Naive thymus-derived CD8-positive, alpha-beta T cell (primary cell): ENCODE measurements at regions of chr1 and their contacts with region 1.

Region 1: DNA sequence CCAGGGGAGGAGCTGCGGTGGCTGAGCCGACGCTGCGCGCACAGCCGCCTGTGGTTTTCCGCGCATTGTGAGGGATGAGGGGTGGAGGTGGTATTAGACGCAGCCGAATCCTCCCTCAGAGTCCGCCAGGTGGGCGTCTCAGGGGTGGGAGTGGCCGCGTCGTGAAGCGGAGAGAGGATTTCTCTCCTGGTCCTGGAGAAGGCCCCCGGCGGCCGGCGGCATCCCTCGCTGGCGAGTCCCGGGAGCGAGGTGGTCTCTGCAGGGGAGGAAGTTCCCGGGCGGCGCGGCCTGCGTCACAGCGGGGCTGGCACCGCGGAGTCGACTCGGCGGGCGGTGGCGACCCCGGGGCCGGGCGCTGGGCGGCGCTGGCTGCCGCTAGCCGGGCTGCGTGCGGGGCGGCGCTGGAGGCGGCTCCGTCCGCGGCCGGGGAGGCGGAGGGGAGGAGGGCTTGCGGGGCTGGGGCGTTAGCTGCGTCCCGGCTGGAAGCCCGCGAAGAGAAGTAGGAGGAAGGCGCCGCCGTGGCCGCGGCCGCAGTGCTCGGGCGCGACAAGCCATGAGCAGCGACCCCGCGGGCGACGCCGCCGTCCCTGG is at the start of gene LRRC8C:
- DNase-seq: peak; percentile 80 to 97 (median 88)
- ATAC-seq: peak; percentile 79 to 84
- H3K4me3 Mint-ChIP-seq: peak within 1 kb of the TSS; percentile 91 to 98 (median 96)
- H3K27ac Mint-ChIP-seq: peak within 1 kb of the TSS; percentile 94 to 99 (median 98)
- H3K4me1 Mint-ChIP-seq: peaks cover 43 to 85% (median 78%) of the 10 kb centered on the region in 4 donors
- H3K27me3 Mint-ChIP-seq: no peaks in the 10 kb centered on the region
- polyA plus RNA-seq, gene LRRC8C: 10.0 to 19.2 (median 14.2) TPM

Region 2: DNA sequence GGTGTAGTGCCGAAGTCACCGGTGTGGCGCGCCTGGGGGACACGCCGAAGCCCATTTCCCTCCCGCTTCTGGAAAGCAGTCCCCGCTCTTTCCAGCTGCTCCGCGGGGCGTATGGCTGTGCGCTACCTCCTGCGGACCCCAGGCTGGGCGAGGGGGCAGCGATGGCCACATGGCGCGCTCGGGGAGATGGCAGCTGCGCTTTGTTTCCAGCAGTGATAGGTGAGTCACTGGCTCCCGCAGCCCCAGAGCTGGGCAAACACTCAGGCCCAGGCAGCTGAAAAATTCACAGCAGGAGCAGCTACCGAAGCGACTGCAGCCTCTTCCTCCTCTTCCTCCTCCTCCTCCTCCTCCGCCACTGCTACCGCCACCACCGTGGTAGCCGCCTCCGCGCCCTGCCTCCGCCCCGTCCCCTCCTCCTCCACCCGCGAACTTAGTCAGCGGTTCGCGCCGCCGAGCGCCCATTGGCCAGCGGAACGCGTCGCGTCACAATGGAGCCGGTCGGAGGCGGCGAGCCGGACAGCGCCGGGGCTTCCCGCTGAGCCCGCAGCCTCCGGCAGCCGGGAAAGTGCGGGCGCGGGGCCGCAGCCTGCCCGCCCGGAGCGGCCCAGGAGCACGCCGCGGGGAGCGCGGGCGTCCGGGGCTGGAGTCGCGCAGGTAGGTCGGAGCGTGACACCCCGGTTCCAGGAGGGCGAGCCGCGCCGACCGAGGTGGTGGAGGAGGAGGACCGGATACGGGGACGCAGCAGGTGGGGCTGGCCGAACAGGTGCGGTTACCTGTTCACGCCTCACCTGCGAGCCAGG is 108.2 kb before region 1 on chr1 and contains the start of gene LRRC8B:
- POLR2A ChIA-PET with region 1: interaction called, 11 read pairs
- DNase-seq: peak; percentile 74 to 90 (median 85)
- ATAC-seq: peak; percentile 85 to 86
- H3K4me3 Mint-ChIP-seq: peak within 1 kb of the TSS in 5 of 10 donors; percentile 81 to 99 (median 92)
- H3K27ac Mint-ChIP-seq: peak within 1 kb of the TSS; percentile 88 to 96 (median 94)
- H3K4me1 Mint-ChIP-seq: peaks cover 7 to 19% (median 14%) of the 10 kb centered on the region in 4 donors
- H3K27me3 Mint-ChIP-seq: no peaks in the 10 kb centered on the region
- polyA plus RNA-seq, gene LRRC8B: 8.5 to 13.6 (median 12.2) TPM

Region 3: DNA sequence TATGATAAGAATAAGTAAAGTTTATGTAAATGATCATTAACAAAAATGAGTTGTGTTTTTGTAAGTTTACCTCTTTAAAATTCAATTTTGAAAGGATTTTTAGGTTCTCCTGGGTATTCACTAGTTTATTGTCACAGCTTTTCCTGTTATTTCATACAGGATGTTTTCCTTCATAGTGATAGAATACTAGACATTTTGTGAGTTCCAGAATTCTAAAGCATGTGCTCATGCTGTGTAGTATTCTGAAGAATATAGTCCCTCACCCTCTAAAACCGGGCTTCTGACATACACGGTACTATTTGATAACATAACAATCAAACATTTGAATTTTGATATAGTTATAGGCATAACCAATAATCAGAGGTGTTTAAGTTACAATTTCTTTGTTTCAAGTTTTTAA is 10.8 kb after region 1 on chr1:
- POLR2A ChIA-PET with region 1: interaction called, 15 read pairs
- DNase-seq: no peak
- ATAC-seq: no peak
- H3K4me3 Mint-ChIP-seq: peak overlapping the region in 2 of 10 donors; percentile 18 to 58
- H3K27ac Mint-ChIP-seq: peak overlapping the region in 7 of 10 donors; percentile 55 to 87 (median 79)
- H3K4me1 Mint-ChIP-seq: peaks cover 19 to 74% (median 55%) of the 10 kb centered on the region in 4 donors
- H3K27me3 Mint-ChIP-seq: no peaks in the 10 kb centered on the region

Region 4: DNA sequence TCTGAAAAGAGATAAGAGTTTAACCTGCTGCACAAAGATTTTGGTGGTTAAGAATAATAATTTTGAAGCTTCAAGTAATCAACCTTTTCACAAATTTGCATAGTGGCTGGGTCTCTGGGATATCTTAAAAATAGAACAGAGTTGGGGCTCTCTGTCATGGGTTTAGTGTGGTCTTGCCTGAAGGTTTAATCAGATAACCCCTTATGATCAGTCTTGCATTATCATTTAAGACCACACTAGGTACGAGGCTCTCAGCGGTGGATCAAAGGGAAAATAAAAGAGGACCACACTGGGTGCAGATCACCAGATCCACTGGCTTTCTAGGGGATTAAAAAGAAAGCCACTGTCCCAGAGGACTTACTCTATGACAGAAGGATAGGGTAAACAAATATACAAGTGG is 19.6 kb after region 1 on chr1:
- POLR2A ChIA-PET with region 1: interaction called, 77 read pairs
- DNase-seq: no peak
- ATAC-seq: no peak
- H3K4me3 Mint-ChIP-seq: peak overlapping the region in 8 of 10 donors; percentile 1 to 49 (median 30)
- H3K27ac Mint-ChIP-seq: peak overlapping the region; percentile 28 to 96 (median 80)
- H3K4me1 Mint-ChIP-seq: peaks cover 38 to 90% (median 81%) of the 10 kb centered on the region in 4 donors
- H3K27me3 Mint-ChIP-seq: no peaks in the 10 kb centered on the region

Region 5: GRCh38 chr1:89657886-89658285 is 25.1 kb after region 1 on chr1:
- POLR2A ChIA-PET with region 1: interaction called, 77 read pairs
- DNase-seq: peak in 8 of 10 donors; percentile 27 to 85 (median 64)
- ATAC-seq: peak; percentile 85 to 93
- H3K4me3 Mint-ChIP-seq: peak overlapping the region; percentile 22 to 79 (median 56)
- H3K27ac Mint-ChIP-seq: peak overlapping the region; percentile 74 to 96 (median 92)
- H3K4me1 Mint-ChIP-seq: peaks cover 44 to 94% (median 85%) of the 10 kb centered on the region in 4 donors
- H3K27me3 Mint-ChIP-seq: no peaks in the 10 kb centered on the region

Region 6: DNA sequence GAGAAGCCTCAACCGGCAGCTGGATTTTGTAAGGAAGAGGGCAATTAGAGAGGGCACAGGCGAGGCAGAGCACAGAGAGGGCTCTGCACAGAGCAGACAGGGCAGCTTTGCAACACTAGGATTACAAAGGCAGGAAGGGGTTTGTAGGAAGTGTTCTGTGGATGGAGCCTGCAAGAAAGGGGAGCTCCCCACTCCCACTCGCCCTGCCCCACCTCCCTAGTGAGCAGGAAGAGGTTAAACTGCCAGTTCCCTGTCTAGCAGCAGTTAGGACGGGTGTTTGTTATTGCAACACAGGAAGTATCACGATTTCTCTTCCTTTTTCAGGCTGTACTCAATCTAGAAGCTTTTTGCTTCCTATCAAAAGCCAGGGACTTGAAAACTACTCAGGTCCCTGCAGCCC is 124.8 kb after region 1 on chr1:
- POLR2A ChIA-PET with region 1: interaction called, 125 read pairs
- DNase-seq: peak in 6 of 10 donors; percentile 15 to 56 (median 42)
- ATAC-seq: peak; percentile 60 to 74
- H3K4me3 Mint-ChIP-seq: peak overlapping the region; percentile 65 to 86 (median 82)
- H3K27ac Mint-ChIP-seq: peak overlapping the region; percentile 84 to 99 (median 94)
- H3K4me1 Mint-ChIP-seq: peaks cover 47 to 90% (median 85%) of the 10 kb centered on the region in 4 donors
- H3K27me3 Mint-ChIP-seq: no peaks in the 10 kb centered on the region

Region 7: GRCh38 chr1:89762779-89763648 is 130.3 kb after region 1 on chr1:
- POLR2A ChIA-PET with region 1: interaction called, 125 read pairs
- DNase-seq: peak; percentile 74 to 93 (median 86)
- ATAC-seq: peak; percentile 98 to 100
- H3K4me3 Mint-ChIP-seq: peak overlapping the region; percentile 78 to 99 (median 92)
- H3K27ac Mint-ChIP-seq: peak overlapping the region; percentile 80 to 97 (median 92)
- H3K4me1 Mint-ChIP-seq: peaks cover 24 to 54% (median 50%) of the 10 kb centered on the region in 4 donors
- H3K27me3 Mint-ChIP-seq: no peaks in the 10 kb centered on the region